Tibial artery (tissue), 4 donors: ENCODE measurements at regions of chr10 and their contacts with region 1.

Region 1: GRCh38 chr10:71396084-71396720 is 518 bp upstream of the CDH23 start:
- DNase-seq: peak in 1 of 2 donors; percentile 50
- H3K4me3 ChIP-seq: peak overlapping the region; percentile 45 to 56
- H3K27ac ChIP-seq: no peak overlapping the region
- H3K4me1 ChIP-seq: peaks cover 0 to 26% (median 19%) of the 10 kb centered on the region in 4 donors
- H3K27me3 ChIP-seq: peaks cover 0 to 45% of the 10 kb centered on the region in 2 donors
- CTCF ChIP-seq: peak; percentile 42 to 51

Region 2: GRCh38 chr10:71383972-71384687 is 12.1 kb before region 1 on chr10:
- intact Hi-C with region 1: no loop called
- DNase-seq: peak; percentile 55 to 83
- H3K4me3 ChIP-seq: no peak overlapping the region
- H3K27ac ChIP-seq: no peak overlapping the region
- H3K4me1 ChIP-seq: no peaks in the 10 kb centered on the region
- H3K27me3 ChIP-seq: peaks cover 0 to 3% of the 10 kb centered on the region in 2 donors
- CTCF ChIP-seq: peak; percentile 89 to 91

Region 3: DNA sequence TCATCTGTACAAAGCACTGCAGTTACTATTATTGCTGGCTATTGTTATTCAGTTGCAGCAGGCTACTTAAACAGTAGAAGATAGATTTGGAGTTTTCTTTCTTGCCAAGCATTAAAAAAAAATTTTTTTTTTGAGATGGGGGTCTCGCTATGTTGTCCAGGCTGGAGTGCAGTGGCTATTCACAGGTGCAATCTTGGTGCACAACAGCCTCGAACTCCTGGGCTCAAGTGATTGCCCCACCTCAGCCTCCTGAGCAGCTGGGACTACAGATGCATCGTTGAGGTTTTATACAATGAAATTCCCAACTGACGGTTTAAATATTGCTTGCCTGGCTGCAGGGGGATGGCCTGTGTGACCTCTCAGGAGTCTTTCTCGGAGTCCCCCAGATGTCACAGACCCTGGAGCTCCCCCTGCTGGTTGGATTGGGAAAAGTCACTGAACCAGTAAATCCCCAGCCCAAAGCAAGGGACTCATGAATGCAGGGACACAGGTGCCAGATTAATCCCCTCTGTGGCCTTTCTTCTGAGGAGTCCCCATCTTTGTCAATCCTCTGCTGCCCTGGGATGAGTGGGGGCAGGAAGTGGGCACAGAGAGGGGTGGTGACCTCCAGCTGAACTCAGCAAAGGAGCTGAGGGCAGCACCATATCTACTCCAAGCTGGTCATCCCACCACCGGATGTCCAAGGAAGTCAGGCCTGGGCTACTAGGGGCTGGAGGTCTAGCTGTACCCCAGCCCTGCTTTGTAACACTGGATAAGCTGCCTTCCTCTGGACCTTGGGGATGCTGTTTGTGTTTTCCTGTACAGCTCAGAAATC is 173.8 kb after region 1 on chr10:
- intact Hi-C with region 1: loop called (anchors 5 kb)
- DNase-seq: peak; percentile 75 to 82
- H3K4me3 ChIP-seq: no peak overlapping the region
- H3K27ac ChIP-seq: no peak overlapping the region
- H3K4me1 ChIP-seq: no peaks in the 10 kb centered on the region
- H3K27me3 ChIP-seq: peaks cover 0 to 12% of the 10 kb centered on the region in 2 donors
- CTCF ChIP-seq: peak; percentile 75 to 84

Region 4: GRCh38 chr10:71613261-71613777 is 217.1 kb after region 1 on chr10:
- intact Hi-C with region 1: loop called (anchors 10 kb)
- DNase-seq: no peak
- H3K4me3 ChIP-seq: no peak overlapping the region
- H3K27ac ChIP-seq: no peak overlapping the region
- H3K4me1 ChIP-seq: peaks cover 0 to 14% (median 0%) of the 10 kb centered on the region in 4 donors
- H3K27me3 ChIP-seq: peaks cover 0 to 23% of the 10 kb centered on the region in 2 donors
- CTCF ChIP-seq: no peak

Region 5: DNA sequence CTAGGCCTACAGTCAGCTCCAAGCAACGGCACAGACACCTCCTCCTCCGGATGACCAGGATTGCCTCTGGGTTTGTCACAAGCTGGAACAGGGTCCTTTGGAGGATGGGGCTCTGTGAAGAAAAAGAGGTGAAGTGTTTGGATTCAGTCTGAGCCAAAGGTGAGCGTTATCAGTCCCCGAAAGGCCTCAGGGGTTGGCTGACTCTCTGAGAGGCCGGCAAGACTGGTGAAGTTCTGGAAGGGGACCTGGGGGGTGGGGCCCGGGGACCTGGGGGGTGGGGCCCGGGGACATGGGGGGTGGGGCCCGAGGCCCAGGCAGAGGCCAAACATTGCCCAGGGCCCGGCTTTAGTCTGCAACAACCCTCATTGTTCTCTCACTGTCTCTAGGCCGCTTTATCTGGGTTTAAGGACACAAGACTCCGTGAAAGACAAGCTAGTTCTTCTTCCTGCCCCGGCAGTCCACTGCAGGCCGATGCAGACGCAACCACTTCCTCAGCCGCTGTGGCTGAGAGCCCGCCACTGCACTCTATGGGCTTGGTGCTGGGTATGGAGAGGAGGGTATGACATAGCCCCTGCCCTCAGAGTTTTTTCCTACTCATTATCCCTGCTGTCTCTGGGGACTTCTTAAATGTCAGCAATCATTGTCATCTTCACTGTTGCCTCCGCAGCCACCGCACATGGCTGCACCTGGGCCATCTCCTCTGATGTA is 482.3 kb after region 1 on chr10:
- intact Hi-C with region 1: no loop called
- DNase-seq: no peak
- H3K4me3 ChIP-seq: no peak overlapping the region
- H3K27ac ChIP-seq: no peak overlapping the region
- H3K4me1 ChIP-seq: no peaks in the 10 kb centered on the region
- H3K27me3 ChIP-seq: no peaks in the 10 kb centered on the region
- CTCF ChIP-seq: no peak